ENCODE measurements at regions of chr1 and their contacts with region 1.

Region 1: DNA sequence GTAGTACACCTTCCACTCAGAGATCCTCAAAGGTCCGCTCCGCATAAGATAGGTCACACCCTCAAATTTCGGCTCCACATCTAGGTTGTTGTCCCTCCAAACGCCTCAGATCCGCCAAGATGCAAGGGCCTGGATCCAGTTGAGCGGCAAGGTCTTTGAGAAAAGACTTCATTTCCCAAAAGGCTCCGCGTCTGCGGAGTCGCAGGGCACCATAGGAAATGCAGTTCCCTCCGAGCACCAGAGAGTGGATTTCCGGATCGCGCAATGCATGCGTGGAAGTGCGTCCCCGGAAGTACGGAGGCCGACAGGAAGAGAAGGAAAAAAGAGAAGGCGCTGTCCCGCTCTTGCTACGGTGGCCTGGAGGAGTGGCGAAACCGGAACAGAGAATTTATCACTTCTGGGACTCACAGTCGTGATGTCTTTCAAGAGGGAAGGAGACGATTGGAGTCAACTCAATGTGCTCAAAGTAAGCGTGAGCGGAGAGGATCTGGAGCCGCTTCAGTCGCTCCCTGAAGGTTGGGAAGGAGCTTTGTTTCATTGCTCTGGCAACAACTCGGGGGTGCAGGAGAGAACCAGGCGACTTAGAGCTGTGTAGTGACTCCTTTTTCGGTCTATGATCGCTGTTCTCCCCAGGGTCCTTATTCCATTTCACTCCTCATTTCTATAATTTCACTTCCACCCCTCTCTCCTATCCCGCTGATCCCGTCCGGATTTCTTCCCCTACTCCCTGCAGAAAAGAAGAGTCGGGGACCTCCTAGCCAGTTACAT is at the starts of genes LYSMD1 and SCNM1:
- DNase-seq: peak; percentile 99
- ATAC-seq: peak; percentile 98
- H3K4me3 ChIP-seq: peak within 1 kb of the TSS; percentile 81 to 99 (median 92)
- H3K4me3 Mint-ChIP-seq: peak within 1 kb of the TSS; percentile 92
- H3K27ac ChIP-seq: peak within 1 kb of the TSS; percentile 26 to 80
- H3K27ac Mint-ChIP-seq: peak within 1 kb of the TSS; percentile 96
- H3K4me1 ChIP-seq: peaks cover 16 to 22% of the 10 kb centered on the region in 2 donors
- H3K4me1 Mint-ChIP-seq: peaks cover 37% of the 10 kb centered on the region
- H3K27me3 ChIP-seq: no peaks in the 10 kb centered on the region
- H3K27me3 Mint-ChIP-seq: no peaks in the 10 kb centered on the region
- CTCF ChIP-seq: no peak
- total RNA-seq, gene LYSMD1: 5.8 TPM in 2 replicates
- total RNA-seq, gene SCNM1: 53.6 and 57.6 TPM in 2 replicates

Region 2: DNA sequence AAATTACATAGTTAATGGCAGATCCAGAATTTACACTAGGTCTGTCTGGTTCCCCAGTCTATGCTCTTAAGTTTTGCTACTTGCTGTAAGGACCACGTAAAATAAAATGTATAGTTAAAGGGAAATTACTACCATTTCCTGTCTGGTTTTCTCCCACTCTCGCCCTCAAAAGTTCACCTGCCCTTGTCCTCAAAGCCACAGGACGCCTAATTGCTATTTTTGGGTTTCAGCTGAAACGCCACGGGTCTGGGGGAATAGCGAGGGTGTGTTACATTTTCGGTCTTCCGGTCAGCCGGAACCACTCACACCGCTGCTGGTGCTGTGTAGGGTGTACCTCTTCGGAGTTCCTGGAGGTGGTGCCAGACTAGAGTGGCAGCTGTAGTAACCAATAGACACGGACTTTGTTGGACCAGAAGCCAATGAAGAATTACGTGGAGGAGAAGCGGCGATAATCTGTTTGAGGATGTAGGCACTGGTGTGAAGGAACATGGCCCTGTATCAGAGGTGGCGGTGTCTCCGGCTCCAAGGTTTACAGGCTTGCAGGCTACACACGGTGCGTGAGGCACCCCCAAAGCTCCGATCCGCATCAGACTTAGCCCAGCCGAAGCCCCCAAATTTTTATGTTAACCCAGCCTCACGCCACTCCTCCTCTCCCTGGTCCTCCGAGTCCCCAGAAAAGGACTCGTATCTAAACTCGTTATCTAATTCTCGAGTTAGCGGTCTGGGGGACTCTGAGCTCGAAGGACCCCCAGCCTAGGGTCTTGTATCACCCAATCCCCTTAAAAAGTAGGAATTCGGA is 678.8 kb before region 1 on chr1 and contains the start of gene TARS2:
- CTCF ChIA-PET with region 1: no interaction called
- POLR2A ChIA-PET with region 1: no interaction called
- intact Hi-C with region 1: loop called (anchors 10 kb)
- DNase-seq: peak; percentile 97
- ATAC-seq: peak; percentile 100
- H3K4me3 ChIP-seq: peak within 1 kb of the TSS; percentile 69 to 95 (median 84)
- H3K4me3 Mint-ChIP-seq: peak within 1 kb of the TSS; percentile 93
- H3K27ac ChIP-seq: peak within 1 kb of the TSS; percentile 75 to 78
- H3K27ac Mint-ChIP-seq: peak within 1 kb of the TSS; percentile 98
- H3K4me1 ChIP-seq: peaks cover 7 to 10% of the 10 kb centered on the region in 2 donors
- H3K4me1 Mint-ChIP-seq: peaks cover 16% of the 10 kb centered on the region
- H3K27me3 ChIP-seq: no peaks in the 10 kb centered on the region
- H3K27me3 Mint-ChIP-seq: no peaks in the 10 kb centered on the region
- CTCF ChIP-seq: no peak
- total RNA-seq, gene TARS2: 48.4 and 53.6 TPM in 2 replicates

Region 3: GRCh38 chr1:151008190-151008860 is 157.6 kb before region 1 on chr1 and contains the start of gene PRUNE1:
- CTCF ChIA-PET with region 1: no interaction called
- POLR2A ChIA-PET with region 1: interaction called, 3 read pairs
- intact Hi-C with region 1: loop called (anchors 1 kb)
- DNase-seq: peak; percentile 98
- ATAC-seq: peak; percentile 97
- H3K4me3 ChIP-seq: peak within 1 kb of the TSS; percentile 74 to 98 (median 85)
- H3K4me3 Mint-ChIP-seq: peak within 1 kb of the TSS; percentile 90
- H3K27ac ChIP-seq: peak within 1 kb of the TSS; percentile 82 to 95
- H3K27ac Mint-ChIP-seq: peak within 1 kb of the TSS; percentile 94
- H3K4me1 ChIP-seq: peaks cover 39 to 55% of the 10 kb centered on the region in 2 donors
- H3K4me1 Mint-ChIP-seq: peaks cover 66% of the 10 kb centered on the region
- H3K27me3 ChIP-seq: no peaks in the 10 kb centered on the region
- H3K27me3 Mint-ChIP-seq: no peaks in the 10 kb centered on the region
- CTCF ChIP-seq: no peak
- total RNA-seq, gene PRUNE1: 20.8 and 21.3 TPM in 2 replicates

Region 4: GRCh38 chr1:151189638-151190445 is 23.9 kb after region 1 on chr1 and contains the start of gene VPS72:
- CTCF ChIA-PET with region 1: interaction called, 3 read pairs
- POLR2A ChIA-PET with region 1: interaction called, 8 read pairs
- intact Hi-C with region 1: loop called (anchors 1 kb)
- DNase-seq: peak; percentile 91
- ATAC-seq: peak; percentile 91
- H3K4me3 ChIP-seq: peak within 1 kb of the TSS; percentile 55 to 92 (median 86)
- H3K4me3 Mint-ChIP-seq: peak within 1 kb of the TSS; percentile 96
- H3K27ac ChIP-seq: peak within 1 kb of the TSS; percentile 75 to 91
- H3K27ac Mint-ChIP-seq: peak within 1 kb of the TSS; percentile 95
- H3K4me1 ChIP-seq: peaks cover 13 to 22% of the 10 kb centered on the region in 2 donors
- H3K4me1 Mint-ChIP-seq: peaks cover 26% of the 10 kb centered on the region
- H3K27me3 ChIP-seq: no peaks in the 10 kb centered on the region
- H3K27me3 Mint-ChIP-seq: no peaks in the 10 kb centered on the region
- CTCF ChIP-seq: no peak
- total RNA-seq, gene VPS72: 48.7 and 71.3 TPM in 2 replicates

Region 5: DNA sequence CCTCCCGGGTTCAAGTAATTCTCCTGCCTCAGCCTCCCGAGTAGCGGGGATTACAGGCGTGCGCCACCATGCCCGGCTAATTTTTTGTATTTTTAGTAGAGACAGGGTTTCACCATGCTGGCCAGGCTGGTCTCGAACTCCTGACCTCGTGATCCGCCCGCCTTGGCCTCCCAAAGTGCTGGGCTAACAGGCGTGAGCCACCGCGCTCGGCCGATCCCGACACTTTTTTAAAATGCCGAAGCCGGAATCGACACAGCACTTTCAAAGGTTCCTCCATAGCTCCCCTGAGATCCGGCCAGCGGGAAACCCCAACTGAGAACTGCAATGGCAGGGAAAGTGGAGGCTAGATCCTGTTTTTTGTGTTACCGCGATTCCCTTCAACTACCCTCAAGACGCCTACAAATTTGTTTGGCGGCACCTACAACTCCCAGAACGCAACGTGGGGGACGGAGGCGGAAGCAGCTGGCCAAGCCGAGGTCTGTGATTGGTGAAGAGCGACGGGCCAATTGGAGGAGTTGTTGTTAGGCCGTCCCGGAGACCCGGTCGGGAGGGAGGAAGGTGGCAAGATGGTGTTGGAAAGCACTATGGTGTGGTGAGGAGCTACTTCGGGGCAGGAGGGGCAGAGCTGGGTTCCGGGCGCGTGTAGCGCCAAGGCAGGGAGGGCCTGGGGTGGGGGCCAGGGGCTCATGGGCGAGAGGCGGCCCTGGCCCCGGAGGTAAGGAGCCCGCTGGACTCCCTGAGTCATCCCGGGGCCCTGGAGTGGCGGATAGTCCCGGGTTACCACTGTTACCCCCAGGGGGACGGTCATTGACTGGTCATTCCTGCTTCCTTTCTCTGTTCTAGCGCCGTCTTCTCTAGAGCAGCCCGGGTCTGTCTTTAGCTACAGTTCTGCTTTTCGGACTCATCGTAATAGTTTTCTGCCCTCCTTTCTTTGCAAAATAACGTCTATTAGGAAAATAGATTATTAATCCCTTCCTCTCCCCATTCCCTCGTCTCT is 88.6 kb after region 1 on chr1 and contains the start of gene PSMD4:
- CTCF ChIA-PET with region 1: interaction called, 3 read pairs
- POLR2A ChIA-PET with region 1: interaction called, 3 read pairs
- intact Hi-C with region 1: loop called (anchors 1 kb)
- DNase-seq: peak; percentile 96
- ATAC-seq: peak; percentile 93
- H3K4me3 ChIP-seq: peak within 1 kb of the TSS; percentile 82 to 97 (median 84)
- H3K4me3 Mint-ChIP-seq: peak within 1 kb of the TSS; percentile 97
- H3K27ac ChIP-seq: peak within 1 kb of the TSS; percentile 66 to 85
- H3K27ac Mint-ChIP-seq: peak within 1 kb of the TSS; percentile 97
- H3K4me1 ChIP-seq: peaks cover 9 to 12% of the 10 kb centered on the region in 2 donors
- H3K4me1 Mint-ChIP-seq: peaks cover 30% of the 10 kb centered on the region
- H3K27me3 ChIP-seq: no peaks in the 10 kb centered on the region
- H3K27me3 Mint-ChIP-seq: no peaks in the 10 kb centered on the region
- CTCF ChIP-seq: no peak
- total RNA-seq, gene PSMD4: 142 and 169 TPM in 2 replicates

Region 6: GRCh38 chr1:151356696-151357095 is 190.8 kb after region 1 on chr1:
- CTCF ChIA-PET with region 1: no interaction called
- POLR2A ChIA-PET with region 1: no interaction called
- intact Hi-C with region 1: no loop called
- DNase-seq: no peak
- ATAC-seq: no peak
- H3K4me3 ChIP-seq: no peak overlapping the region
- H3K4me3 Mint-ChIP-seq: no peak overlapping the region
- H3K27ac ChIP-seq: no peak overlapping the region
- H3K27ac Mint-ChIP-seq: no peak overlapping the region
- H3K4me1 ChIP-seq: no peaks in the 10 kb centered on the region
- H3K4me1 Mint-ChIP-seq: no peaks in the 10 kb centered on the region
- H3K27me3 ChIP-seq: no peaks in the 10 kb centered on the region
- H3K27me3 Mint-ChIP-seq: no peaks in the 10 kb centered on the region
- CTCF ChIP-seq: no peak